ENCODE measurements at regions of chr4 and their contacts with region 1.

Region 1: DNA sequence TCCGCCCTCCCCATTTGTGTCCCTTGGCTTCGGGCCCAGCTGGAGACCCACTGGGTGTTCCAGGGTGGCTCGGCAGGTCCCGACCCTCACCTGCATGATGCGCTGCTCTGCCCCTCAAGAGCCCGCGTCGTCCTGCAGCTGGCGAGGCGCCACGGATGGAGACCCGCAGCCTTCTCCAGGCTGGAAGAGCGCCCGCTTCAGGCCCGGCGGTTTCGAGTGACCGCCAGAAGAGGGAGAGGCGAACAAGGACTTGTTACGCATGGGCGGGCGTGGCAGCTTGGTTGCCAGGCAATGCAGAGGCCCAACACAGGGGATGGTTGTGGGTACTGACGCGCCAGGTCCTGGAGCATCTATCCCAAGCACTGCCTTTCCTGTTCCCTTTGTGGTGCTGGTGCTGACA is at the start of gene PDCL2:
- DNase-seq: no peak
- ATAC-seq: no peak
- H3K4me3 ChIP-seq: no peak within 1 kb of the TSS
- H3K27ac ChIP-seq: no peak within 1 kb of the TSS
- H3K4me1 ChIP-seq: no peaks in the 10 kb centered on the region
- H3K27me3 ChIP-seq: no peaks in the 10 kb centered on the region
- CTCF ChIP-seq: no peak
- POLR2A ChIP-seq: no peak
- RAD21 ChIP-seq: no peak
- total RNA-seq, gene PDCL2: not detected in 2 replicates

Region 2: DNA sequence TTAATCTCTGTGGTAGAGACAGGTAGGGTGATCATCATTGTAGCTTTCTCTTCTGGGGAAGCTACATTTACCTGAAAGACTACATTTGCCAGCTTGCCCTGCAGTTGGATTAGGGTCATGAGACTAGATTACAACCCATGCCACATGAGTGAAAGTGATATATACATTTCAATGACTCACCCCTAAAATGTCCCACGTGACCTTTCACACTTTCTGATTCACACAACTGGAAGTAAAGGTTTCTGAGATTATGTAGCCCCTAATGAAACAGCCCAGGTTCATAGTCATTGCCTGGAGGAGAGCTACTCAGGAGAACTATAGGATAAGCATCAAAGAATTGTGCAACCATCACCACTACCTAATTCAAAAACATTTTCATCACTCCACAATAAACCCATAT is 17.8 kb before region 1 on chr4:
- CTCF ChIA-PET with region 1: no interaction called
- POLR2A ChIA-PET with region 1: no interaction called
- dilution Hi-C with region 1: no loop called
- in situ Hi-C with region 1: no loop called
- intact Hi-C with region 1: no loop called
- DNase-seq: no peak
- ATAC-seq: no peak
- H3K4me3 ChIP-seq: no peak overlapping the region
- H3K27ac ChIP-seq: no peak overlapping the region
- H3K4me1 ChIP-seq: no peaks in the 10 kb centered on the region
- H3K27me3 ChIP-seq: no peaks in the 10 kb centered on the region; the same call in 1 of the 2 replicates
- CTCF ChIP-seq: no peak
- POLR2A ChIP-seq: no peak
- RAD21 ChIP-seq: no peak

Region 3: DNA sequence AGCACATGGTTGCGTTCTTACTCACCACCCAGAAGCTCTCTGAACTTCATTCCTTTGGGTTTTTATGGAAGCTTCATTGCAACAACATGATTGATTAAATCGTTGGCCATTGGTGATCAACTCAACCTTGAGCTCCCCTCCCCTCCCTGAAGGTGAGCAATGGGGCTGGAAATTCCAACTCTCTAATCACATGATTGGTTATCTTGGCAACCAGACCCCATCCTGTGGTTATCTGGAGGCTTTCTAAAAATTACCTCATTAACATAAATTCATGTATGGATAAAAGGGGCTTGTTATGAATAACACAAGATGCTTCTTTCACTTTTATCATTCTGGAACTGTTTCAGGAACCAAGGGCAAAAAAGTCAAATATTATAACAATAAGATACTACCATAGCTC is 78.7 kb after region 1 on chr4:
- CTCF ChIA-PET with region 1: no interaction called
- POLR2A ChIA-PET with region 1: no interaction called
- dilution Hi-C with region 1: no loop called
- in situ Hi-C with region 1: no loop called
- intact Hi-C with region 1: no loop called
- DNase-seq: no peak
- ATAC-seq: no peak
- H3K4me3 ChIP-seq: no peak overlapping the region
- H3K27ac ChIP-seq: no peak overlapping the region
- H3K4me1 ChIP-seq: no peaks in the 10 kb centered on the region
- H3K27me3 ChIP-seq: no peaks in the 10 kb centered on the region; the same call in 1 of the 2 replicates
- CTCF ChIP-seq: no peak
- POLR2A ChIP-seq: no peak
- RAD21 ChIP-seq: no peak

Region 4: DNA sequence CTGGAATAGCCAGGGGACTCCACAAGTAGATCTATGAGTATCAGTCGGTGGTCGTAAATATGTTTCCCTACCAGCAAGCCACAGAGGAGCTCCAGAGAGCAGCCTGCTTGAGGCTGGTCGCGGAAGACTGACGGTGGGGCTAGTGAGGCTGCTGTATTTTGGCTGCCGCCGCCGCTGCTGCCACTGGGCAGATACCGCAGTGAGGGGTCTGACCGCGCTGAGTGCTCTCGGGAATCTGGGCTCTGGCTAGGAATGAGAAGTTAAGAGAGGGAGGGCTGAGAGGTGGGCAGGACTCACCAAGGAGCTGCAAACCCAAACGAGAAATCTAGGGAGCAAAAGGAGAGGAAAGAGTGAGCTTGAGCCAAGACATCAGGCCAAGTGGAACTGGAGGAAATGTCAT is 227.6 kb after region 1 on chr4 and contains the start of gene EXOC1L:
- CTCF ChIA-PET with region 1: no interaction called
- POLR2A ChIA-PET with region 1: interaction called, 12 read pairs
- dilution Hi-C with region 1: no loop called
- in situ Hi-C with region 1: no loop called
- intact Hi-C with region 1: no loop called
- DNase-seq: no peak
- ATAC-seq: peak; percentile 88
- H3K4me3 ChIP-seq: peak within 1 kb of the TSS; percentile 29
- H3K27ac ChIP-seq: no peak within 1 kb of the TSS
- H3K4me1 ChIP-seq: no peaks in the 10 kb centered on the region
- H3K27me3 ChIP-seq: peaks cover 8% of the 10 kb centered on the region
- CTCF ChIP-seq: no peak
- POLR2A ChIP-seq: no peak
- RAD21 ChIP-seq: no peak
- total RNA-seq, gene EXOC1L: not detected in 2 replicates

Measured in IMR-90 (cell line).